AG04450 (cell line): ENCODE measurements at regions of chr10 and their contacts with region 1.

Region 1: GRCh38 chr10:71319042-71319799 is at the start of gene SLC29A3:
- DNase-seq: peak; percentile 21
- H3K4me3 ChIP-seq: peak within 1 kb of the TSS; percentile 71
- H3K27ac ChIP-seq: no peak within 1 kb of the TSS
- H3K27me3 ChIP-seq: peaks cover 4% of the 10 kb centered on the region
- CTCF ChIP-seq: peak; percentile 77
- polyA plus RNA-seq, gene SLC29A3: 2.4 and 3.8 TPM in 2 replicates

Region 2: GRCh38 chr10:71001470-71001869 is 317.8 kb before region 1 on chr10:
- CTCF ChIA-PET with region 1: no interaction called
- POLR2A ChIA-PET with region 1: no interaction called
- DNase-seq: no peak
- H3K4me3 ChIP-seq: no peak overlapping the region
- H3K27ac ChIP-seq: no peak overlapping the region
- H3K27me3 ChIP-seq: peaks cover 12% of the 10 kb centered on the region
- CTCF ChIP-seq: no peak

Region 3: DNA sequence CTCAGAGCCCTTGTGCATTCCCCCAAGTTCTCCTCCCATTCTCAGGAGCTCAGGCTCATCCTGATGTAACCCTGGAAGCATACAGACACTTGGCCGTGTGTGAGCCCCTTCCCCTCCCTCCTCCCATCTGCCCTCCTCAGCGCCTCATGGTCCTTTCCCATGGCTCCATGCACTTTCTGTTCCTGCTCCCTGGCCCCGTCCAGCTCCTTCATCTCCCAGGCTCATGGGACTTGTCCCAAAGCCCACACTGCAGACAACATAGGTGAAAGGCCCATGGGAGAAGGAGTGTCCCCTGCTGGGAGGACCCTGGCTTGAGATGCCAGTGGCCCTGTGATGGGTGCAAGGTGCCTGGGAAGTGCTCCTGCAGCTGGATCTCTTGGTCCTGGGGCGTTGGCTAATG is 24.4 kb before region 1 on chr10:
- CTCF ChIA-PET with region 1: no interaction called
- POLR2A ChIA-PET with region 1: no interaction called
- DNase-seq: no peak
- H3K4me3 ChIP-seq: no peak overlapping the region
- H3K27ac ChIP-seq: no peak overlapping the region
- H3K27me3 ChIP-seq: no peaks in the 10 kb centered on the region
- CTCF ChIP-seq: no peak

Region 4: DNA sequence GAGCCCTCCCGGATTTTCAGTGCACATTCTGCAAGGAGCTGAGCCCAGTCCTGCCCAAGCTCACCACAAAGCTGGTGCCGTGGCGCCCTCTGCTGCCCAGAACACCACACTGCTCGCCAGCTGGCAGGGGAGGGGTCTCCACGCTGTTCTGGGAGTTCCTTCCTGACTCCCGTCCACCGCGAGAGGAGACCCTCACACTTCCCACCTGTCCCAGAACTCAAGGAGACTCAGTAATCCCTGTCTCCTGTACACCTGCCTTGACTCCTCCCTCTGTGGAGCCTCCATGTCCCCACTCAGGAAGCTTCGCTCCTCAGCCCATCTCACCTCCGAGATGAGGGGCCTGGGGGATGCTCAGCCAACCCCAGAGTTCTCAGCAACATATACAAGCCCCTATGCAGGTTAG is 389.1 kb after region 1 on chr10:
- CTCF ChIA-PET with region 1: interaction called, 20 read pairs
- POLR2A ChIA-PET with region 1: no interaction called
- DNase-seq: no peak
- H3K4me3 ChIP-seq: no peak overlapping the region
- H3K27ac ChIP-seq: no peak overlapping the region
- H3K27me3 ChIP-seq: peaks cover 31% of the 10 kb centered on the region
- CTCF ChIP-seq: peak; percentile 74